Naive thymus-derived CD4-positive, alpha-beta T cell (primary cell): ENCODE measurements at regions of chr12 and their contacts with region 1.

Region 1: GRCh38 chr12:46372544-46373110 is at the start of gene SLC38A2:
- DNase-seq: peak; percentile 95 to 98 (median 96)
- ATAC-seq: peak; percentile 96
- H3K4me3 ChIP-seq: peak within 1 kb of the TSS; percentile 87
- H3K4me3 Mint-ChIP-seq: peak within 1 kb of the TSS; percentile 79 to 99 (median 96)
- H3K27ac ChIP-seq: peak within 1 kb of the TSS; percentile 89
- H3K27ac Mint-ChIP-seq: peak within 1 kb of the TSS; percentile 91 to 100 (median 99)
- H3K4me1 ChIP-seq: peaks cover 37 to 41% of the 10 kb centered on the region in 2 donors
- H3K4me1 Mint-ChIP-seq: peaks cover 31 to 68% (median 59%) of the 10 kb centered on the region in 7 donors
- H3K27me3 ChIP-seq: no peaks in the 10 kb centered on the region
- H3K27me3 Mint-ChIP-seq: peaks cover 0 to 11% (median 0%) of the 10 kb centered on the region in 5 donors
- total RNA-seq, gene SLC38A2: 157 to 269 (median 175) TPM

Region 2: DNA sequence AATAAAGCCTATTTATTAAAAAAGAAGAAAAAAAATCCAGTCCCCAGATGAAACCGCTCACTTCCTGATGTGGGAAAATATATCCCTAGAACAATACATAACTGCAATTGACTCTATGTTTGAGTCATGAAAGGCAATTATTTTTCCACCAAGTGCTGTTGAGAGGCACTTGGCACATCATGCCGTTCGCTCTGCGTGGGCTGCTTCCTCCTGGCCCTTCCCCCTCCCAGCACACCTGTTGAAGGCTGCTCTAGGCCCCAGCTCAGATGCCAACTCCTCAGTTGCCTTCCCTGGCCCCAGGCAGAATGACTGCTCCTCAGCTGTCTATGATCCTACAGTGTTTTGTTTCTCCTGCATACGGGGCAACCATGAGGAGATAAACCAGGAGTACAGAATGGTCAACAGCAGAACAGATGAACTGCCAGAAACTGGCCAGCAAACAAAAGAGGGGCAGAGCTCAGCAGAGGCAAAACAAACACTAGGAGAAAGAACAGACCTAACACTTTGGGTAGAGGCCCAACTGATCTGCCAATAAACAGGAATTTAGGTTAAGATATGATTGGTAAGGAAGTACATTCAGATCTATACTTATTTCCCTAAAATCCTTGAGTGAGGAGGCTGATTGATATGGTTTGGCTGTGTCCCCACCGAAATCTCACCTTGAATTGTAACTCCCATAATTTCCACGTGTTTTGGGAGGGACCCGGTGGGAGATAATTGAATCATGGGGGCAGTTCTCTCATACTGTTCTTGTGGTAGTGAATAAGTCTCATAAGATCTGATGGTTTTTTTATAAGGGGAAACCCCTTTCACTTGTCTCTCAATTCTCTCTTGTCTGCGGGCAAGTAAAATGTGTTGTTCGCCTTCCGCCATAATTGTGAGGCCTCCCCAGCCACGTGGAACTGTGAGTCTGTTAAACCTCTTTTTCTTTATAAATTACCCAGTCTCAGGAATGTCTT is 162.4 kb before region 1 on chr12:
- CTCF ChIA-PET with region 1: no interaction called
- POLR2A ChIA-PET with region 1: interaction called, 6 read pairs
- intact Hi-C with region 1: loop called (anchors 1 to 2 kb)
- DNase-seq: peak in 8 of 9 donors; percentile 47 to 81 (median 68)
- ATAC-seq: peak; percentile 66
- H3K4me3 ChIP-seq: no peak overlapping the region
- H3K4me3 Mint-ChIP-seq: peak overlapping the region; percentile 47 to 76 (median 69)
- H3K27ac ChIP-seq: peak overlapping the region; percentile 78
- H3K27ac Mint-ChIP-seq: peak overlapping the region; percentile 89 to 100 (median 98)
- H3K4me1 ChIP-seq: peaks cover 65 to 72% of the 10 kb centered on the region in 2 donors
- H3K4me1 Mint-ChIP-seq: peaks cover 45 to 98% (median 96%) of the 10 kb centered on the region in 7 donors
- H3K27me3 ChIP-seq: no peaks in the 10 kb centered on the region
- H3K27me3 Mint-ChIP-seq: no peaks in the 10 kb centered on the region

Region 3: GRCh38 chr12:46354111-46354798 is 18.4 kb before region 1 on chr12:
- CTCF ChIA-PET with region 1: interaction called, 4 read pairs
- POLR2A ChIA-PET with region 1: interaction called, 9 read pairs
- intact Hi-C with region 1: loop called in 1 of 2 experiments (anchors 2 kb)
- DNase-seq: no peak
- ATAC-seq: peak; percentile 38
- H3K4me3 ChIP-seq: no peak overlapping the region
- H3K4me3 Mint-ChIP-seq: no peak overlapping the region
- H3K27ac ChIP-seq: no peak overlapping the region
- H3K27ac Mint-ChIP-seq: peak overlapping the region in 4 of 9 donors; percentile 29 to 75 (median 54)
- H3K4me1 ChIP-seq: peaks cover 0 to 7% of the 10 kb centered on the region in 2 donors
- H3K4me1 Mint-ChIP-seq: peaks cover 6 to 32% (median 15%) of the 10 kb centered on the region in 7 donors
- H3K27me3 ChIP-seq: no peaks in the 10 kb centered on the region
- H3K27me3 Mint-ChIP-seq: no peaks in the 10 kb centered on the region

Region 4: GRCh38 chr12:46459861-46460545 is 87.4 kb after region 1 on chr12:
- CTCF ChIA-PET with region 1: interaction called, 3 read pairs
- POLR2A ChIA-PET with region 1: interaction called, 6 read pairs
- intact Hi-C with region 1: loop called (anchors 1 kb)
- DNase-seq: peak in 4 of 9 donors; percentile 10 to 38 (median 26)
- ATAC-seq: peak; percentile 63
- H3K4me3 ChIP-seq: peak overlapping the region; percentile 47
- H3K4me3 Mint-ChIP-seq: peak overlapping the region; percentile 74 to 95 (median 88)
- H3K27ac ChIP-seq: peak overlapping the region; percentile 42
- H3K27ac Mint-ChIP-seq: peak overlapping the region; percentile 86 to 99 (median 96)
- H3K4me1 ChIP-seq: peaks cover 26 to 56% of the 10 kb centered on the region in 2 donors
- H3K4me1 Mint-ChIP-seq: peaks cover 45 to 67% (median 61%) of the 10 kb centered on the region in 7 donors
- H3K27me3 ChIP-seq: no peaks in the 10 kb centered on the region
- H3K27me3 Mint-ChIP-seq: no peaks in the 10 kb centered on the region

Region 5: DNA sequence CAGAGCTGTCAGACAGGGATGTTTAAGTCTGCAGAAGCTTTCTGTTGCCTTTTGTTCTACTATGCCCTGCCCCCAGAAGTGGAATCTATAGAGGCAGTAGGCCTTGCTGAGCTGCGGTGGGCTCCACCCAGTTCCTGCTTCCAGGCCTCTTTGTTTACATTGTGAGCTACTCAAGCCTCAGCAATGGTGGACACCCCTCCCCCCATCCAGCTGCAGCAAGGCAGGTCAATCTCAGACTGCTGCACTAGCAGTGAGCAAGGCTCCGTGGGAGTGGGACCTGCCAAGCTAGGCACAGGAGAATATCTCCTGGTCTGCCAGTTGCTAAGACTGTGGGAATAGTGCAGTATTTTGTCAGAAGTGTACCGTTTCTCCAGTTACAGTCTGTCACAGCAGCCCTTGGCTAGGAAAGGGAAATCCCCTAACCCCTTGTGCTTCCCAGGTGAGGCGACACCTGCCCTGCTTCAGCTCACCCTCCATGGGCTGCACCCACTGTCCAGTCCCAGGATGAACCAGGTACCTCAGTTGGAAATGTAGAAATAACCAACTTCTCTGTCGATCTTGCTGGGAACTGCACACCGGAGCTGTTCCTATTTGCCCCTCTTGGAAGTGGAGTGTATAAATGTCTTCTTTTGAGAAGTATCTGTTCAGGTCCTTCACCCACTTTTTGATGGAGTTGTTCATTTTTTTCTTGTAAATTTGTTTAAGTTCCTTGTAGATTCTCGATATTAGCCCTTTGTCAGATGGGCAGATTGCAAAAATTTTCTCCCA is 213.4 kb after region 1 on chr12:
- CTCF ChIA-PET with region 1: interaction called, 3 read pairs
- POLR2A ChIA-PET with region 1: interaction called, 10 read pairs
- intact Hi-C with region 1: loop called (anchors 1 to 5 kb)
- DNase-seq: peak in 7 of 9 donors; percentile 33 to 81 (median 71)
- ATAC-seq: peak; percentile 27
- H3K4me3 ChIP-seq: peak overlapping the region; percentile 46
- H3K4me3 Mint-ChIP-seq: peak overlapping the region; percentile 13 to 82 (median 68)
- H3K27ac ChIP-seq: no peak overlapping the region
- H3K27ac Mint-ChIP-seq: peak overlapping the region; percentile 6 to 95 (median 91)
- H3K4me1 ChIP-seq: peaks cover 5 to 21% of the 10 kb centered on the region in 2 donors
- H3K4me1 Mint-ChIP-seq: peaks cover 29 to 79% (median 74%) of the 10 kb centered on the region in 7 donors
- H3K27me3 ChIP-seq: no peaks in the 10 kb centered on the region
- H3K27me3 Mint-ChIP-seq: no peaks in the 10 kb centered on the region

Region 6: DNA sequence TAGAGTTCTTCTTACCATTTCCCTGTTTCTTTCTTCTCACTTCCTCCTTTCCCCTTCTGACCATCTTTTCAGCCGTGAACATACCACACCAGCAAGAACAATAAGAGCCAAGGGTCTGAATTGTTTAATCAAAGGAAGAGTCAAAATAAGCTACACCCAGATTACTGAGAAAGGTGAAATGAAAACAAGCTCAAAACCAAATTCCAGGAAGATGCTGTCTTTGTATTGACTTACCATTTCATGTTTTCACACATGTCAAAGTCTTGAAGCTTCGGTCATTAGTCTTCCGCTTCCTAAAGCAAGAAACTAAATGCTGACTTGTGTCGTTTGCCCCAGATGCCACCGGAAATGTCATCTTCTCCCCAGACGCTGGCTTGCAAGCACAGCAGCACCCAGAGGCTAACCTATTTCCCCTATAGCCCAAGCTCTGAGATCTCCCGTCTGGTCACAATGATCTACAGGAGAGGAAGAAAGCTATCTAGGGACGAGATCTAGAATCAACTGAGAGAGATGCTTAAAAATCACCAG is 843.6 kb after region 1 on chr12:
- CTCF ChIA-PET with region 1: no interaction called
- POLR2A ChIA-PET with region 1: no interaction called
- intact Hi-C with region 1: loop called (anchors 2 to 5 kb)
- DNase-seq: peak in 8 of 9 donors; percentile 56 to 82 (median 72)
- ATAC-seq: peak; percentile 81
- H3K4me3 ChIP-seq: peak overlapping the region; percentile 80
- H3K4me3 Mint-ChIP-seq: peak overlapping the region; percentile 91 to 100 (median 98)
- H3K27ac ChIP-seq: peak overlapping the region; percentile 76
- H3K27ac Mint-ChIP-seq: peak overlapping the region; percentile 91 to 98 (median 96)
- H3K4me1 ChIP-seq: peaks cover 9 to 14% of the 10 kb centered on the region in 2 donors
- H3K4me1 Mint-ChIP-seq: peaks cover 6 to 52% (median 26%) of the 10 kb centered on the region in 7 donors
- H3K27me3 ChIP-seq: no peaks in the 10 kb centered on the region
- H3K27me3 Mint-ChIP-seq: peaks cover 0 to 4% (median 0%) of the 10 kb centered on the region in 5 donors